Vagina (tissue), 2 donors: ENCODE measurements at regions of chr20 and their contacts with region 1.

Region 1: DNA sequence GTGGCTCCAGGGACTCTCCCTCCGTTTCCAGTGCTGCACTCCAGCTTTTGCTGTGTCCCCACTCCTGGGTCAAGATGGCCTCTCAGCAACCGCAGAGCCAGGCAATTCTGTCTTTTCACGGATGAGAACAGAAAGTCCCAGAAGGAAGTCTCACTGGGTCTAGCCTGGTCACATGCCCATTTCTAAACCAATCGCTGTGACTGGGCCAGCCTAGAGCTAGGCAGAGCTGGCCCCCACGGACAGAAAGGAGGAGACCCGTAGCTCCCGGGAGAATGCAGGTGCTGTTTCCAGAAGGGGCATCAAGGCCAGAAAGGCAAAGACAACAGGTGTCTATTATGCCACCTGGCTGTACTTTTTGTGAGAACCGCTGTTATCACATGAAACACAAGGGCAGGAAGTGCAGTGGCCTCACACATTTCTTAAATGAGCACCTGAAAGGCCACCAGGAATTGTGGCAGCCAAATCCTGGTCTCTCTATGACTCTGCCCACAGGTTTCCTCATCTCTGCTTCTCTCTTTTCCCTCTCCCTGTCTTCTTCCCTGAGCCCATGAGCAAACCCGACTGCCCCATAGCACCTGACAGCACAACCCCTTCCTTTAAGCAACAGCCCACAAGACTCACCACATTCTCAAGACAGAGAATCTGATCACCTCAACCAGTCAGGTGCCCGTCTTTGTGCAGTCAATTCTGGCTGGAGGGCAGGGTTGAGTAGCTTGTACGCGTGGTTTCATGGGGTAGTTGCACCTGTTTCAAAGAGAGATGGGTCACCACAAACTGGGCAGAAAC is 37.1 kb upstream of the B4GALT5 start:
- DNase-seq: no peak
- H3K4me3 ChIP-seq: no peak overlapping the region
- H3K27ac ChIP-seq: no peak overlapping the region
- H3K4me1 ChIP-seq: peaks cover 18% of the 10 kb centered on the region
- H3K27me3 ChIP-seq: no peaks in the 10 kb centered on the region
- CTCF ChIP-seq: no peak
- POLR2A ChIP-seq: no peak

Region 2: GRCh38 chr20:49496553-49497397 is 254.0 kb before region 1 on chr20:
- intact Hi-C with region 1: no loop called
- DNase-seq: no peak
- H3K4me3 ChIP-seq: no peak overlapping the region
- H3K27ac ChIP-seq: no peak overlapping the region
- H3K4me1 ChIP-seq: no peaks in the 10 kb centered on the region
- H3K27me3 ChIP-seq: no peaks in the 10 kb centered on the region
- CTCF ChIP-seq: no peak
- POLR2A ChIP-seq: no peak

Region 3: GRCh38 chr20:51535075-51535386 is 1784.2 kb after region 1 on chr20:
- intact Hi-C with region 1: loop called (anchors 5 kb)
- DNase-seq: no peak
- H3K4me3 ChIP-seq: no peak overlapping the region
- H3K27ac ChIP-seq: no peak overlapping the region
- H3K4me1 ChIP-seq: peaks cover 21% of the 10 kb centered on the region
- H3K27me3 ChIP-seq: no peaks in the 10 kb centered on the region
- CTCF ChIP-seq: no peak
- POLR2A ChIP-seq: no peak

Region 4: GRCh38 chr20:51595058-51595532 is 1844.3 kb after region 1 on chr20:
- intact Hi-C with region 1: no loop called
- DNase-seq: peak in 1 of 2 donors; percentile 94
- H3K4me3 ChIP-seq: no peak overlapping the region
- H3K27ac ChIP-seq: peak overlapping the region; percentile 66
- H3K4me1 ChIP-seq: peaks cover 15% of the 10 kb centered on the region
- H3K27me3 ChIP-seq: no peaks in the 10 kb centered on the region
- CTCF ChIP-seq: peak; percentile 56 to 93 (median 66)
- POLR2A ChIP-seq: no peak